AG04450 (cell line): ENCODE measurements at regions of chr1 and their contacts with region 1.

Region 1: DNA sequence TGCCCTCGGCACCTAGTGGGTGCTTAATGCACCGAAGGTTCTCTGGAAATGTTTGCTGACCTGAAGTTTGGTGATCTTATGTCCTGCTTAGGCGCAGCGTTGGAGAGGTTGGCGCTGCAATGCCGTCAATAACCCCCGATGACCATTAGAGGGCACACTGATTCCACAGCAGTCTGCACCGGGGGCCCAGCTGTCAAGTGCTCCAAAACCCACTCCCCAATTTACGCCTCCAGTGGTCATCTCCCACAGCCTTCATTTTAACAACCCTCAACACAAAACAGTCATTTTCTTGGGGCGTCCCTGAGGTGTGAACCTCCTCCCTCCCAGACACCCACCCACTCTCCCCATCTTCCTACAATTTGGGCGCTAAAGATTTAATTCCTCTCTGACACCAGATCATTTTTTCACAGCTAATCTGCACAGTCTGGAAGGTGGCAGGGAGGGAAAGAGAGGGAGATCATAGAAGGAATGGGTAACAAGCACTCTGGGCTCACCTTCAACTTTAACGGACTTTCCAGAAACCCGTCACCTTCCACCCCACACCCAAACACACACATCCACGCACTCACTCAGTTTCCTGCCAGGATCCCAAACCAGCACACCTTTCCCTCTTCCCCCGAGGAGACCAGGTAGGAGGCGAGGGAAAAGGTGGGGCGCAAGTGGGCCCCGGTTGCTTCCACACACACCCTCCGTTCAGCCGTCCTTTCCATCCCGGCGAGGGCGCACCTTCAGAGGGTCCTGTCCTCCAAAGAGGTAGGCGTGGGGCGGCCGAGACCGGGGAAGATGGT is 576 bp upstream of the NPR1 start:
- DNase-seq: no peak
- H3K4me3 ChIP-seq: peak overlapping the region; percentile 45
- H3K27ac ChIP-seq: no peak overlapping the region
- H3K27me3 ChIP-seq: peaks cover 50% of the 10 kb centered on the region
- CTCF ChIP-seq: peak; percentile 96

Region 2: GRCh38 chr1:153220606-153221303 is 457.2 kb before region 1 on chr1:
- CTCF ChIA-PET with region 1: no interaction called
- POLR2A ChIA-PET with region 1: no interaction called
- DNase-seq: no peak
- H3K4me3 ChIP-seq: no peak overlapping the region
- H3K27ac ChIP-seq: no peak overlapping the region
- H3K27me3 ChIP-seq: no peaks in the 10 kb centered on the region
- CTCF ChIP-seq: no peak

Region 3: DNA sequence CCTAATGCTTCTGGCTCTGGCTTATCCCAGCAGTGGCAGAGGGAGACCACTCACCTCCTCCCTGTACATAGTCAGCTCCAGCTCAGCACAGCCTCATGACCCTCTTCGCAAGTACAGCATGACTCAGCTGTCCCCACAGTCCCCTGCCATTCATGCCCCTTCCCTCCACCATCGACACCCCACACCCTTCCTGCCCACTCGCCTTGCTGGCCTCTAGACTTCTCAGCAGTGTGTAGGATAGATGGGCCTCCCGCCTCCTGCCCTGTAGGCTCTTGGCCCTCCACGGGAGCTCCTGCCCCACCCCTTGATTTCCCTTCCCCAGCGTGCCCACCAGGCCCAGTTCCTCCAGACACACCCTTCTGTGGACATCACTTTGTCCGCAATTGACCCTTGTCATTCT is 10.4 kb after region 1 on chr1:
- CTCF ChIA-PET with region 1: interaction called, 11 read pairs
- POLR2A ChIA-PET with region 1: no interaction called
- DNase-seq: no peak
- H3K4me3 ChIP-seq: no peak overlapping the region
- H3K27ac ChIP-seq: no peak overlapping the region
- H3K27me3 ChIP-seq: peaks cover 40% of the 10 kb centered on the region
- CTCF ChIP-seq: no peak

Region 4: DNA sequence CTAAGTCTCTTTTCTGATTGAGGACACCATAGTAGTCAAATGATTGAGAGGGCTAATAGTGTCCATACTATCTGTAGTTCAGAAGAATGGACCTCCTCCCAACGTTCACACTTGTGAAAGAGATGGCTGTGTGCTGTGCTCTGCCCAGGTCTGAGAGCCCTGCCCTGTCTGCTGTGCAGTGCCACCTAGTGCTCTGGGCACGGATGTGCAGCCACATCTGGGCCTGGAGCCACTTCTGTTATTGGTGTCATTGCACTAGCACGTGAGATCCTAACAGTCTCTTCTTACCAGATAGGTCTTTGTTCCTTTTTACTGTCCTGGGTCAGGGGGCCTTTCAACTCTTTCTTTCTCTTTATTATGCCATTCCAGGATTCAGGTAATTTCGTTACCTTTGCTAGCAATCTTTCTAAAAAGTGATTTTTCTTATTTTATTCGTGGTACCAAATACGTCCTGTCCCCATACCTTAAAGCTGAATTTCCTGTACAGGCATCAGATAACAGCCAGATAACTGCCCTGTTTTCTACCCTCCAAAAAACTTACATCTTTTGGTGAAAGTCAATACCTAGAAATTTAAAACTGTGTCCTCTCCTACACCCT is 71.6 kb after region 1 on chr1:
- CTCF ChIA-PET with region 1: interaction called, 50 read pairs
- POLR2A ChIA-PET with region 1: no interaction called
- DNase-seq: peak; percentile 67
- H3K4me3 ChIP-seq: no peak overlapping the region
- H3K27ac ChIP-seq: no peak overlapping the region
- H3K27me3 ChIP-seq: no peaks in the 10 kb centered on the region
- CTCF ChIP-seq: peak; percentile 96

Region 5: GRCh38 chr1:153866045-153866850 is 188.3 kb after region 1 on chr1:
- CTCF ChIA-PET with region 1: no interaction called
- POLR2A ChIA-PET with region 1: no interaction called
- DNase-seq: peak; percentile 26
- H3K4me3 ChIP-seq: no peak overlapping the region
- H3K27ac ChIP-seq: no peak overlapping the region
- H3K27me3 ChIP-seq: no peaks in the 10 kb centered on the region
- CTCF ChIP-seq: no peak